ENCODE measurements at regions of chr11 and their contacts with region 1.

Region 1: GRCh38 chr11:102317099-102317767 is at the start of gene BIRC3:
- DNase-seq: peak; percentile 94
- H3K4me3 Mint-ChIP-seq: peak within 1 kb of the TSS; percentile 91
- H3K27ac Mint-ChIP-seq: peak within 1 kb of the TSS; percentile 98
- H3K4me1 Mint-ChIP-seq: peaks cover 80% of the 10 kb centered on the region
- H3K27me3 Mint-ChIP-seq: no peaks in the 10 kb centered on the region
- total RNA-seq, gene BIRC3: 33.1 to 39.6 TPM

Region 2: GRCh38 chr11:102341844-102342318 is 24.6 kb after region 1 on chr11:
- CTCF ChIA-PET with region 1: interaction called, 16 read pairs
- POLR2A ChIA-PET with region 1: no interaction called
- DNase-seq: peak; percentile 85
- H3K4me3 Mint-ChIP-seq: no peak overlapping the region
- H3K27ac Mint-ChIP-seq: no peak overlapping the region
- H3K4me1 Mint-ChIP-seq: peaks cover 17% of the 10 kb centered on the region
- H3K27me3 Mint-ChIP-seq: no peaks in the 10 kb centered on the region

Measured in activated CD4-positive, alpha-beta T cell treated with anti-CD3 and anti-CD28 coated beads, Interleukin-2, amount 10 ng/mL, durations not matched to agents 7 days and 5 days (primary cell).